ENCODE measurements at regions of chr10 and their contacts with region 1.

Region 1: DNA sequence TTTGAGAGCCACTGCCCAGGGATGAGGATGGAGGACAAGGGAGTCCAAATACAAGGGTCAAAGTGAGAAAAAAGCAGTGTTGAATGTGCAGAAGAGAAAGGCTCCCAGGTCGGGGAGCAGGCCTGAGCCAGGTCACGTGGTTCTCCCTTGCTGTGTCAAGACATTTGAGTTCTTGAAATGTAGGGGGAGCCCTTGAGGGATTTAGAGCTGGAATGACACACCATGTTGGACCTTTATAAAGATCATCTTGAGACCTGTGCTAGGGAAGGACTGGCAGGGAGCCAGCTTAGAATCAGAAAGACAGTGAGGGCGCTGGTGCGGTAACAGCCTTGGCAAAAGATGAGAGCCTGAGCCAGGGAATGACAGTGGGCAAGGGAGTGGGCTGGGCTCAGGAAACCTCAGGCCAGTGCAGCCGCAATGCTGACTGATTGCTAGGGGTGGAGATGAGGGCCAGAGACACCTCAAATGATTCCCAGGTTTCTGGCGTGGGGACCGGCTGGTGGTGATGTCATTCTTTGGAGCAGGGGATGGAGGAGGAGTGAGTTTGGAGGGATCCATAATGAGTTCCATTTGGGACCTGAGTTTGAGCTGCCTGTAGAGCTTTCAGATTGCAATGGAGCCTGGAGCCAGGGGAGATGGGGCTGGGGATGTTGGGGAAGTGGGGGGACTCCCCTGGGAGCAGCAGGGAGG is 120.1 kb downstream of the PTPN20 start:
- DNase-seq: no peak
- H3K4me3 ChIP-seq: no peak overlapping the region
- H3K27ac ChIP-seq: peak overlapping the region in 1 of 2 experiments; percentile 67; a peak in 1 of 4 replicates
- H3K4me1 ChIP-seq: peaks cover 0 to 64% of the 10 kb centered on the region in 2 experiments; a peak in 2 of 4 replicates
- H3K27me3 ChIP-seq: peaks cover 11% of the 10 kb centered on the region; the same call in 1 of the 2 replicates
- CTCF ChIP-seq: peak; percentile 21; the same call in 1 of the 2 replicates
- EP300 ChIP-seq: no peak; a peak in 1 of 4 replicates
- RAD21 ChIP-seq: peak; percentile 21; the same call in 1 of the 2 replicates

Region 2: GRCh38 chr10:47047671-47048525 is 16.5 kb after region 1 on chr10:
- CTCF ChIA-PET with region 1: interaction called, 100 read pairs
- POLR2A ChIA-PET with region 1: interaction called, 7 read pairs
- DNase-seq: peak; percentile 69
- H3K4me3 ChIP-seq: no peak overlapping the region; a peak in 1 of 4 replicates
- H3K27ac ChIP-seq: peak overlapping the region in 1 of 2 experiments; percentile 43; a peak in 1 of 4 replicates
- H3K4me1 ChIP-seq: peaks cover 0 to 61% of the 10 kb centered on the region in 2 experiments; a peak in 1 of 4 replicates
- H3K27me3 ChIP-seq: no peaks in the 10 kb centered on the region; the same call in 1 of the 2 replicates
- CTCF ChIP-seq: peak; percentile 71
- EP300 ChIP-seq: no peak
- RAD21 ChIP-seq: peak; percentile 74

Region 3: DNA sequence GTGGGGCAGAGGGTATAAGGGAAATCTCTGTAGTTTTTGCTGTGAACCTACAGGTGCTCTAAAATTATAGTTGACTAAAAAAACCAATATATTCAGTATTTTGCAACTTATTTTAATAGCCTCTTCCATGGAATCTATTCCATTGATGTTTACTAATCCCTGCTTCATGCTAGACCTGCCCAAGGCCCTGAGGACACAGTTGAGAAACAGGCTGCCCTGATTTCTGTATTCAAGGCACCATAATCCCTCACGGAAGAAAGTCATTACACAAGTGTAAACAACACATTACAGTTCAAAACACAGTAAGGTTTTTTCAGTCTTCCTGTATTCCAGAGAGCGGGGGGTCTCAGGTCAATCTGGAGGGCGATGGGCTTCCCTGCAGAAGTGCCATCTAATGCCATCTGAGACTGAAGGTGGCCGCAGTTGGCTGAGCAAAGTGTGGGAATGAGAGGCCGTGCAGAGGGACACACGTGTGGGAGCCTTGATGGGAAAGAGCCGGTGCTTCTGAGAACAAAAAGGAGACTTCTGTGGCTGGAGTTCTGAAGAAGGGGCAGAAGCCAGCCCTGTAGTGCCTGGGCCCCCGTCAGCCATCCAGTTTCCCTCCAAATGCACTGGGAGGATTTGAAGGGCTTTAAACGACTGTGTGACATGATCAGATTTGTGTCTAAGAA is 26.8 kb after region 1 on chr10:
- CTCF ChIA-PET with region 1: no interaction called
- POLR2A ChIA-PET with region 1: no interaction called
- DNase-seq: no peak
- H3K4me3 ChIP-seq: no peak overlapping the region
- H3K27ac ChIP-seq: no peak overlapping the region
- H3K4me1 ChIP-seq: peaks cover 0 to 5% of the 10 kb centered on the region in 2 experiments; a peak in 1 of 4 replicates
- H3K27me3 ChIP-seq: peaks cover 12% of the 10 kb centered on the region; the same call in 1 of the 2 replicates
- CTCF ChIP-seq: no peak
- EP300 ChIP-seq: no peak
- RAD21 ChIP-seq: no peak

Region 4: GRCh38 chr10:47067949-47068940 is 36.9 kb after region 1 on chr10:
- CTCF ChIA-PET with region 1: no interaction called
- POLR2A ChIA-PET with region 1: no interaction called
- DNase-seq: no peak
- H3K4me3 ChIP-seq: no peak overlapping the region
- H3K27ac ChIP-seq: no peak overlapping the region
- H3K4me1 ChIP-seq: no peaks in the 10 kb centered on the region; a peak in 1 of 4 replicates
- H3K27me3 ChIP-seq: no peaks in the 10 kb centered on the region; the same call in 1 of the 2 replicates
- CTCF ChIP-seq: no peak
- EP300 ChIP-seq: no peak
- RAD21 ChIP-seq: no peak

Region 5: DNA sequence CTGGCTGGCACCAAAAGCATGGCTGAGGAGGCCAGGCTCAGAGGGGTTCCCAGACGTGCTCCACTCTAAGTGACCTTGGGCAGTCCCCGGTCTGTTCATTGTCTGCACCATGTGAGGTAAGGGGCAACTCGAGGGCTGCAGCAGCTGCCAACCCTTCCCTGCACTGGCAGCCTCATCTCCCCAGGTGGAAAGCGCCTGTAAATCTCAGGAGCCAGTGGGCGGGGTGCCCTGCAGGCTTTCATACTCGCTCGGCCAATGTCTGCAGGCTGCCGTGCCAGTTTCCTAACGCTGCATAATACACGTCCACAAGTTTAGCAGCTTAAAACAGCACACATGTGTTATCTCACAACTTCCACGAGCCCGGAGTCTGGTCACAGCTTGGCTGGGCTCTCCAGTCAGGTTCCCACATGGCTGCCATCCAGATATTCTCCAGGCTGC is 256.0 kb after region 1 on chr10:
- CTCF ChIA-PET with region 1: interaction called, 5 read pairs
- POLR2A ChIA-PET with region 1: interaction called, 15 read pairs
- DNase-seq: peak; percentile 50
- H3K4me3 ChIP-seq: no peak overlapping the region
- H3K27ac ChIP-seq: peak overlapping the region in 1 of 2 experiments; percentile 92; a peak in 2 of 4 replicates
- H3K4me1 ChIP-seq: peaks cover 0 to 54% of the 10 kb centered on the region in 2 experiments; a peak in 1 of 4 replicates
- H3K27me3 ChIP-seq: no peaks in the 10 kb centered on the region
- CTCF ChIP-seq: no peak
- EP300 ChIP-seq: peak in 1 of 2 experiments; percentile 54; a peak in 1 of 4 replicates
- RAD21 ChIP-seq: no peak